ENCODE measurements at regions of chr7 and their contacts with region 1.

Region 1: GRCh38 chr7:2719007-2719406 is 31.0 kb downstream of the AMZ1 start:
- DNase-seq: peak; percentile 89
- H3K4me3 ChIP-seq: no peak overlapping the region
- H3K27ac ChIP-seq: no peak overlapping the region
- H3K4me1 ChIP-seq: peaks cover 0 to 27% of the 10 kb centered on the region in 2 experiments; a peak in 1 of 4 replicates
- H3K27me3 ChIP-seq: no peaks in the 10 kb centered on the region
- CTCF ChIP-seq: peak; percentile 66
- EP300 ChIP-seq: no peak
- RAD21 ChIP-seq: peak; percentile 46

Region 2: GRCh38 chr7:2688409-2689331 is 30.3 kb before region 1 on chr7:
- CTCF ChIA-PET with region 1: interaction called, 11 read pairs
- POLR2A ChIA-PET with region 1: no interaction called
- DNase-seq: peak; percentile 72
- H3K4me3 ChIP-seq: peak overlapping the region; percentile 27 to 50; a peak in 2 of 4 replicates
- H3K27ac ChIP-seq: no peak overlapping the region
- H3K4me1 ChIP-seq: peaks cover 7 to 16% of the 10 kb centered on the region in 2 experiments; a peak in 3 of 4 replicates
- H3K27me3 ChIP-seq: peaks cover 21% of the 10 kb centered on the region
- CTCF ChIP-seq: no peak
- EP300 ChIP-seq: no peak
- RAD21 ChIP-seq: no peak

Region 3: GRCh38 chr7:2732959-2733584 is 14.1 kb after region 1 on chr7:
- CTCF ChIA-PET with region 1: interaction called, 94 read pairs
- POLR2A ChIA-PET with region 1: no interaction called
- DNase-seq: no peak
- H3K4me3 ChIP-seq: no peak overlapping the region
- H3K27ac ChIP-seq: no peak overlapping the region
- H3K4me1 ChIP-seq: peaks cover 0 to 14% of the 10 kb centered on the region in 2 experiments; a peak in 1 of 4 replicates
- H3K27me3 ChIP-seq: no peaks in the 10 kb centered on the region
- CTCF ChIP-seq: no peak
- EP300 ChIP-seq: no peak
- RAD21 ChIP-seq: no peak

Measured in SK-N-SH (cell line).